K562 (cell line): ENCODE measurements at regions of chr3 and their contacts with region 1.

Region 1: DNA sequence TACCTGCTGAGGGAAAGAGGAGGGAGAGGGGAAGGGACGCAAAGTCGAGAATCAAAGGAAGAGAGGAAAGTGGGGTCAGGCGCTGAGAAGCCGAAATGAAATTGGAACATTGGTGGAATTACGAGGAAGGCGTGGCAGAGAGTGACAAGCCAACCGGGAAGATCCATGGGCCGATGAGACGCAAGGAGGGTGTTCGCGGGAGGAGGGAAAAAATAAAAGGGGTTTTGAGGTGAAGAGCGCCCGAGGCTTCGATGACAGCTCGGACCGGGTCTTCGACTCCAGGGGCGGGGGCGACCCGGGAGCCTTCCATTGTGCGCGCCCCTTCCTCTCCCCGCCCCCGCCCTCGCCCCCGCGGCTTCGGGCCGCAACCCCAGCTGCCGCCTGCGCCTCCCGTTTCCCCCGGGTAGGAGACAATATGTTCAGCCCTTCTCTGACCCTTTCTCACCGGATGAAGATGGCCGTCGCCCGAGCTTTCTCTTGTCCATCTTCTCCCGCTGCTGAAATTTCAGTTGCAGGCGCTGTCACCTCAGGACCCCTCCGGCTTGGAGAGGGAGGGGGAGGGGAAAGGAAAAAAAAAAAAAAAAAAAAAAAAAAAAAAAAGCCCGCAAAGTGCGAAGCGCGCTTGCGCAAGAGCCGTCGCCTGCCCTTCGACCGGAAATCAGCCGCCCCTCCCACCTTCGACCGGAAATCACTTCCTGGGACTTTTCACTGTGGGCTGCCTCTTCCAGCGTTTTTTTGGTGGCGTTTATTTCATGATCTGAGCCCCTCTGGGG is at the start of gene SENP7:
- DNase-seq: peak; percentile 84 to 89 (median 88)
- ATAC-seq: peak; percentile 71
- H3K4me3 ChIP-seq: peak within 1 kb of the TSS; percentile 76
- H3K27ac ChIP-seq: peak within 1 kb of the TSS; percentile 87
- H3K4me1 ChIP-seq: peaks cover 0 to 17% of the 10 kb centered on the region in 2 experiments; a peak in 3 of 5 replicates
- H3K27me3 ChIP-seq: no peaks in the 10 kb centered on the region
- CTCF ChIP-seq: 0 out of 6 replicates have a peak, but pooled peaks of 1 of the 3 experiments have one; percentile 13
- EP300 ChIP-seq: peak; percentile 37; the same call in 1 of the 2 replicates
- POLR2A ChIP-seq: peak; percentile 33
- RAD21 ChIP-seq: no peak
- polyA plus RNA-seq, gene SENP7: 4.1 to 8.3 TPM

Region 2: DNA sequence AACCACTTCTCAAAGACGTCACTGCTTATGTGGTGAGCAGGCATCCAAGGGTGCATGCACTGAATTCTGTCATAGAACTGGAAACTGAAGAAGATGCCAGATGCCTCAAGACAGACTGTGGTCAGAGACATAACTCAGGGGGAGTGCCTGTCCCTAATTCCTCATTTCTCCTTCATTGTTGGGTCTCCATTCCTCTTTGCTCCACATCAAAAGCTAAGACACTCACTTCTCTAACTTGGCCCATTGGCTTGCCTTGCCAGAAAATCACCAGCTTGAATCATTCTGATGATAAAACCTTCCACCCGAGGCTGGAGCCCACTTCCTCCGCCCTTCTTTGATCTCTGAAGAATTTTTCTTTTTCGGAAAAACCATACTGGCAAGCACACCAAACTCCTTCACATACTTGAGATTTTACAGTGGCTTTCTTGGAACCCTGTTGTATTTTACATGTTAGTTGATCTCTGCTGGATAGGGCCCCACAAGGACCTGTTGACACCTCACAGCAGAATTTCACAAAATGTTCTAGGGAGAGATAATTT is 1804.6 kb before region 1 on chr3:
- CTCF ChIA-PET with region 1: no interaction called
- POLR2A ChIA-PET with region 1: no interaction called
- in situ Hi-C with region 1: no loop called
- intact Hi-C with region 1: no loop called
- DNase-seq: no peak
- ATAC-seq: no peak
- H3K4me3 ChIP-seq: no peak overlapping the region
- H3K27ac ChIP-seq: no peak overlapping the region
- H3K4me1 ChIP-seq: no peaks in the 10 kb centered on the region
- H3K27me3 ChIP-seq: no peaks in the 10 kb centered on the region
- CTCF ChIP-seq: no peak
- EP300 ChIP-seq: no peak
- POLR2A ChIP-seq: no peak
- RAD21 ChIP-seq: no peak

Region 3: GRCh38 chr3:101325393-101326134 is 187.3 kb before region 1 on chr3:
- CTCF ChIA-PET with region 1: no interaction called
- POLR2A ChIA-PET with region 1: no interaction called
- in situ Hi-C with region 1: no loop called
- intact Hi-C with region 1: loop called (anchors 10 kb)
- DNase-seq: peak; percentile 15 to 73 (median 30)
- ATAC-seq: peak; percentile 91
- H3K4me3 ChIP-seq: no peak overlapping the region
- H3K27ac ChIP-seq: peak overlapping the region; percentile 59; the same call in 2 of the 3 replicates
- H3K4me1 ChIP-seq: peaks cover 0 to 2% of the 10 kb centered on the region in 2 experiments; a peak in 2 of 5 replicates
- H3K27me3 ChIP-seq: no peaks in the 10 kb centered on the region
- CTCF ChIP-seq: no peak
- EP300 ChIP-seq: peak; percentile 52; the same call in 1 of the 2 replicates
- POLR2A ChIP-seq: no peak
- RAD21 ChIP-seq: no peak

Region 4: DNA sequence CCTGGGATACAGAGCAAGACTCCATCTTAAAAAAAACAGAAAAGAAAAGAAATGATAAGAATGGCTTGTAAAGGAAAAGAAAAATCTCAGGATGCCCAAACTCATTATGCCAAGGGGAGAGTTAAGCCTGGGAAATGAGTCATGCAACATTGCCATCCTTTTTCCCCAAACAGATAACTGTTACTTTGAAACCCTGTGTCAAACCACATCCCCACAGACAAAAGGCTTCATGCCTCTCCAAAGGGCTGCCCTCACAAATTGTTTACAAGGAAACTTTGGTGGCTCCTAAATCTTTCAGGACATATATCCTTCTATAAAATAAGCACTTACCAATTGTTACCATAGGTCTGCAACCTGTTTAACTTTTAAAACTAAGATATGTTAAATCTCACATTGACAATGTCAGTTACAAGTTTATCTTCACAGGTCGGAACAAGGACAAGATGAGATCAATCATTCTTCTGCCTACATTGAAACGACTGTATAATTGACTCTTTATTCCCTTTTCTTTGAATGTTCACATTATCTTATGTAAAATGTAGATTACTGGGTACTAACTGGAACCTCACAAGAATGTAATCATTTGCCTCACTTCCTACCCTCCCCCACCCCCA is 18.7 kb after region 1 on chr3:
- CTCF ChIA-PET with region 1: no interaction called
- POLR2A ChIA-PET with region 1: interaction called, 6 read pairs
- in situ Hi-C with region 1: no loop called
- intact Hi-C with region 1: loop called (anchors 2 kb)
- DNase-seq: peak in 1 of 4 experiments; percentile 38
- ATAC-seq: no peak; the same call in 2 of the 3 replicates
- H3K4me3 ChIP-seq: no peak overlapping the region
- H3K27ac ChIP-seq: peak overlapping the region; percentile 83
- H3K4me1 ChIP-seq: peaks cover 10 to 57% of the 10 kb centered on the region in 2 experiments
- H3K27me3 ChIP-seq: no peaks in the 10 kb centered on the region
- CTCF ChIP-seq: no peak
- EP300 ChIP-seq: no peak
- POLR2A ChIP-seq: no peak
- RAD21 ChIP-seq: no peak

Region 5: GRCh38 chr3:101561630-101562328 is 48.9 kb after region 1 on chr3 and contains the start of gene TRMT10C:
- CTCF ChIA-PET with region 1: no interaction called
- POLR2A ChIA-PET with region 1: no interaction called
- in situ Hi-C with region 1: loop called (anchors 5 kb)
- intact Hi-C with region 1: loop called (anchors 2 kb)
- DNase-seq: peak; percentile 75 to 93 (median 80)
- ATAC-seq: peak; percentile 95
- H3K4me3 ChIP-seq: peak within 1 kb of the TSS; percentile 94
- H3K27ac ChIP-seq: peak within 1 kb of the TSS; percentile 96
- H3K4me1 ChIP-seq: peaks cover under 1 to 8% of the 10 kb centered on the region in 2 experiments; a peak in 3 of 5 replicates
- H3K27me3 ChIP-seq: no peaks in the 10 kb centered on the region
- CTCF ChIP-seq: no peak
- EP300 ChIP-seq: 0 out of 2 replicates have a peak, but pooled peaks have one; percentile 29
- POLR2A ChIP-seq: peak; percentile 91
- RAD21 ChIP-seq: 0 out of 4 replicates have a peak, but pooled peaks of 1 of the 2 experiments have one; percentile 3
- polyA plus RNA-seq, gene TRMT10C: 101 to 106 TPM

Region 6: GRCh38 chr3:101635954-101636798 is 123.3 kb after region 1 on chr3:
- CTCF ChIA-PET with region 1: no interaction called
- POLR2A ChIA-PET with region 1: no interaction called
- in situ Hi-C with region 1: no loop called
- intact Hi-C with region 1: loop called (anchors 5 kb)
- DNase-seq: peak; percentile 40 to 85 (median 56)
- ATAC-seq: peak; percentile 69
- H3K4me3 ChIP-seq: peak overlapping the region; percentile 63
- H3K27ac ChIP-seq: peak overlapping the region; percentile 86
- H3K4me1 ChIP-seq: peaks cover 0 to 5% of the 10 kb centered on the region in 2 experiments; a peak in 3 of 5 replicates
- H3K27me3 ChIP-seq: no peaks in the 10 kb centered on the region
- CTCF ChIP-seq: peak; percentile 54 to 73 (median 72)
- EP300 ChIP-seq: no peak
- POLR2A ChIP-seq: no peak
- RAD21 ChIP-seq: peak in 1 of 2 experiments; percentile 51; a peak in 3 of 4 replicates

Region 7: DNA sequence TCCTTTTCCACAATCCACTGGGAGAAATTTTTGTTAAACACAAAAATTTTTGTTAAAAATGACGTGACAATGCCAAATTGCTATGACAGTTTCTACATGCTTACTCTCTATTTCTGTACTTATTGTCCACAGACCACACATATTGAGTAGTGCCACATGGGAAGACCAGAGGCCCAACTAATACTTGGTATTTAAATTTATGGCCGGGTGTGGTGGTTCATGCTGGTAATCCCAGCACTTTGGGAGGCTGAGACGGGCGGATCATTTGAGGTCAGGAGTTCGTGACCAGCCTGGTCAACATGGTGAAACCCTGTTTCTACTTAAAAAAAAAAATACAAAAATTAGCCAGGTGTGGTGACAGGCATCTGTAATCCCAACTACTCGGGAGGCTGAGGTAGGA is 143.8 kb after region 1 on chr3:
- CTCF ChIA-PET with region 1: no interaction called
- POLR2A ChIA-PET with region 1: no interaction called
- in situ Hi-C with region 1: no loop called
- intact Hi-C with region 1: no loop called
- DNase-seq: no peak
- ATAC-seq: no peak
- H3K4me3 ChIP-seq: no peak overlapping the region
- H3K27ac ChIP-seq: no peak overlapping the region
- H3K4me1 ChIP-seq: no peaks in the 10 kb centered on the region
- H3K27me3 ChIP-seq: no peaks in the 10 kb centered on the region
- CTCF ChIP-seq: no peak
- EP300 ChIP-seq: no peak
- POLR2A ChIP-seq: no peak
- RAD21 ChIP-seq: no peak

Region 8: DNA sequence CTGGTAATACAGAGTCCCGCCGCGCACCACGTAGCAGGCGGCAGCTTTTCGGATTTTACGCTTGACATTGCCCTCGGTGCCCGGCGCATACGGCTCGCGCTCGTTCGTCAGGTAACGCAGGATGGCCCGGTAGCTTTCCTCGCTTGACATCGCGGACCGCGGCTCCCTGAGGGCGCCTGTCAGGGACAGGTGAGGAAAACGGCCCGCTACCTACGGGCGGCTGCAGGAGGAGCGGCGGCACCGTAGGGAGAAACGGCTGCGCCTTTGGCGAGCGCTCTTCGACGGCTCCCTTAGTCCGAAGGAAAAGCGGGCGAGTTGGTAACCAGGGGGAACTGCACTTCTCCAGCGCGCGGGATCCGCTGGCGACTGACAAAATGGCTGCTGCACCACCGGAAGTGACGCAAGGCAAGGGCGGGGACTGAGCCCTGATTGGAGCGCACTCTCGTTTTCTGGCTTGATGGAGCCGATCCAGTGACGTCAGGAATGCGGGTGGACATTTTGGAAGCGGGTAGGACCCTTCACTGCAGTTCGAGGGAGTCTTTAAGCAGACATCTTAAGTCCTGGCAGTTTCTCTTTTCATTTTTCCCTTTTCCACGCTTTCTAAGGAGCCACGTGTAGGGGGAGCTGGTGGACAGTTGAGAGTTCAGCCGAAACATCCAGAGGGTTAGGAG is 164.1 kb after region 1 on chr3 and contains the start of gene ZBTB11:
- CTCF ChIA-PET with region 1: no interaction called
- POLR2A ChIA-PET with region 1: no interaction called
- in situ Hi-C with region 1: no loop called
- intact Hi-C with region 1: loop called (anchors 5 kb)
- DNase-seq: peak; percentile 81 to 99 (median 87)
- ATAC-seq: peak; percentile 80
- H3K4me3 ChIP-seq: peak within 1 kb of the TSS; percentile 79
- H3K27ac ChIP-seq: peak within 1 kb of the TSS; percentile 86
- H3K4me1 ChIP-seq: peaks cover 6 to 14% of the 10 kb centered on the region in 2 experiments; a peak in 4 of 5 replicates
- H3K27me3 ChIP-seq: no peaks in the 10 kb centered on the region
- CTCF ChIP-seq: peak; percentile 55 to 77 (median 67)
- EP300 ChIP-seq: peak; percentile 20
- POLR2A ChIP-seq: peak; percentile 68
- RAD21 ChIP-seq: peak in 1 of 2 experiments; percentile 28; a peak in 1 of 4 replicates
- polyA plus RNA-seq, gene ZBTB11: 6.2 to 7.2 TPM